ENCODE measurements at regions of chr2 and their contacts with region 1.

Region 1: DNA sequence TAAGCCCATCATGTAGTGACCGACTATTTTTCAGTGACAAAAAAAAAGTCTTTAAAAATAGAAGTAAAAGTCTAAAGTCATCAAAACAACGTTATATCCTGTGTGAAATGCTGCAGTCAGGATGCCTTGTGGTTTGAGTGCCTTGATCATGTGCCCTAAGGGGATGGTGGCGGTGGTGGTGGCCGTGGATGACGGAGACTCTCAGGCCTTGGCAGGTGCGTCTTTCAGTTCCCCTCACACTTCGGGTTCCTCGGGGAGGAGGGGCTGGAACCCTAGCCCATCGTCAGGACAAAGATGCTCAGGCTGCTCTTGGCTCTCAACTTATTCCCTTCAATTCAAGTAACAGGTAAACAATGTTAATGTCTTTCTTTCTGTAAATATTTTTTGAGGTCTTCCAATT is at the start of gene CD28:
- DNase-seq: peak; percentile 88
- H3K4me3 Mint-ChIP-seq: peak within 1 kb of the TSS; percentile 85
- H3K27ac Mint-ChIP-seq: peak within 1 kb of the TSS; percentile 100
- H3K4me1 Mint-ChIP-seq: peaks cover 53% of the 10 kb centered on the region
- H3K27me3 Mint-ChIP-seq: no peaks in the 10 kb centered on the region
- total RNA-seq, gene CD28: 132 and 133 TPM in 2 replicates

Region 2: GRCh38 chr2:203535078-203535783 is 171.2 kb before region 1 on chr2 and contains the start of gene RAPH1:
- intact Hi-C with region 1: loop called (anchors 1 kb)
- DNase-seq: peak; percentile 44
- H3K4me3 Mint-ChIP-seq: peak within 1 kb of the TSS; percentile 89
- H3K27ac Mint-ChIP-seq: peak within 1 kb of the TSS; percentile 90
- H3K4me1 Mint-ChIP-seq: peaks cover 30% of the 10 kb centered on the region
- H3K27me3 Mint-ChIP-seq: peaks cover 52% of the 10 kb centered on the region
- total RNA-seq, gene RAPH1: 4.2 and 4.6 TPM in 2 replicates

Region 3: DNA sequence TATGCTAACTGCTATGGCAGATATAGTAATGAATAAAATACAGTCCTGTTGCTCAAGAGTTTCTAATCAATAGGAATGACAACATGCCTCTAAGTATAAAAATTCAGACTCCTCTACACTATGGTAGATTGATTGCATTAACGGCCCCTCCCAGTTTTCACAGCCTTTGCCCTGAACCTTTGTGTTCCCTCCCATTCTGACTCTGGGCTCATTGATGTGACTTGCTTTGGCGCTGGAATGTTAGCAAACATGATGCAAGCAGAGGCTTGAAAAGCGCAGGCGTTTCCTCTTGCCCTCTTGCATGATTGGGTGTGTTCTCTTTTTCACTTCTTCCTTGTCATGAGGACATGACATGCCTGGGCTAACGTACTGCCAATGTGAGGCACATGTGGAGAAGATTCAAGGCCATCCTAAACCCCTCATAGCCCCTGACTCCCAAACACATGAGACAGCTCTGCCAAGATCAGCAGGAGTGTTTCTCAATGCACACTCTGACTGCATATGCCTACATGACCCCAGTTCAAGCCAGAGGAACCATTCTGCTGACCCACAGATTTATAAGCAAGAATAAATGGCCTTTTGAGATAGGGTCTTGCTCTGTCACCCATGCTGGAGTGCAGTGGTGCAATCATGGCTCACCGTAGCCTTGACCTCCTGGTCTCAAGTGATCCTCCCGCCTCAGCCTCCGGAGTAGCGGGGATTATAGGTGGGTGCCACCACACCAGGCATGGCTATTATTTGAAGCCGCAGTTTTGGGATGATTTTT is 49.7 kb before region 1 on chr2:
- intact Hi-C with region 1: loop called (anchors 5 kb)
- DNase-seq: no peak
- H3K4me3 Mint-ChIP-seq: no peak overlapping the region
- H3K27ac Mint-ChIP-seq: peak overlapping the region; percentile 48
- H3K4me1 Mint-ChIP-seq: peaks cover 42% of the 10 kb centered on the region
- H3K27me3 Mint-ChIP-seq: peaks cover 1% of the 10 kb centered on the region

Region 4: GRCh38 chr2:203694191-203694590 is 12.2 kb before region 1 on chr2:
- intact Hi-C with region 1: loop called (anchors 1 kb)
- DNase-seq: no peak
- H3K4me3 Mint-ChIP-seq: no peak overlapping the region
- H3K27ac Mint-ChIP-seq: no peak overlapping the region
- H3K4me1 Mint-ChIP-seq: peaks cover 14% of the 10 kb centered on the region
- H3K27me3 Mint-ChIP-seq: peaks cover 8% of the 10 kb centered on the region

Region 5: GRCh38 chr2:203740780-203741281 is 34.4 kb after region 1 on chr2:
- intact Hi-C with region 1: loop called (anchors 1 kb)
- DNase-seq: peak; percentile 66
- H3K4me3 Mint-ChIP-seq: peak overlapping the region; percentile 67
- H3K27ac Mint-ChIP-seq: peak overlapping the region; percentile 97
- H3K4me1 Mint-ChIP-seq: peaks cover 78% of the 10 kb centered on the region
- H3K27me3 Mint-ChIP-seq: no peaks in the 10 kb centered on the region

Region 6: DNA sequence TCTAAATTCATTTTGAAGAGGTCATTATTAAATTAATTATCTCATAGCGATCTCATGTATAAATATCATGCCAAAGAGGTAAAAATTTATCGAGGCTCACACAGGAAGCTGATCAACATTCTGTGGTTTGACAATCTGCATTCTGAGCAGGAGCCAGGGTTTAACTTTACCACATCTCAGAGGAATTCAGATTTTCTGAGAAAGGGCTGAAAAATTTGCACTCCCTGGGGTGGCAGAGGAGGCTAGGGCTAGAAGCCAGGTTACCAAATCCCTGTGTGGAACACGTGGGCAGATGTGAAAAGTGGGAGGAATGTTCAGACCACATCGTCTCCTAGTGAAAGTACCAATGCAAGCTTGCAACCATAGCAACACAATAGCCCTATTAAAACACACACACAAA is 97.7 kb after region 1 on chr2:
- intact Hi-C with region 1: loop called (anchors 1 kb)
- DNase-seq: no peak
- H3K4me3 Mint-ChIP-seq: peak overlapping the region; percentile 19
- H3K27ac Mint-ChIP-seq: peak overlapping the region; percentile 76
- H3K4me1 Mint-ChIP-seq: peaks cover 80% of the 10 kb centered on the region
- H3K27me3 Mint-ChIP-seq: peaks cover 2% of the 10 kb centered on the region

Region 7: GRCh38 chr2:203934041-203934492 is 227.7 kb after region 1 on chr2:
- intact Hi-C with region 1: loop called (anchors 2 kb)
- DNase-seq: peak; percentile 39
- H3K4me3 Mint-ChIP-seq: peak overlapping the region; percentile 73
- H3K27ac Mint-ChIP-seq: peak overlapping the region; percentile 93
- H3K4me1 Mint-ChIP-seq: peaks cover 59% of the 10 kb centered on the region
- H3K27me3 Mint-ChIP-seq: no peaks in the 10 kb centered on the region

Region 8: DNA sequence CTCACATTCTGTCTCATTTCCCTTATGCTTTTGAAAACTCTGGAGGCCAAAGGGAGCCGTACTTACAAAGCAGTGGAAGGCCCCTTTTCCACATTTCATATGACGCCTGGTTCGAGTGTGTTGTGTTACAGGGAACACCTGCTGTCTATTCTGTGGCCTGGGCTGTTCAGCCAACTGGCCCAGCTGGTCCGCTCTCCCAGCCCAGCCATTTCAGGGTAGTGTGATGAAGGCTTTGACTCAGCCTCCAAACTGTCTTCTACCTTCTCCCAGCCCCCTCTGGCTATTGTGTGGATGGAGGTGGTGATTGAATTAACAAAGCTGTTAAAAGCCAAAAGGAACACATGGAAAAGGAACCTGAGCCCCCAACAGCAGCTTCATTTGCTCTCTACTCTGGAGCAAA is 464.0 kb after region 1 on chr2:
- intact Hi-C with region 1: no loop called
- DNase-seq: no peak
- H3K4me3 Mint-ChIP-seq: no peak overlapping the region
- H3K27ac Mint-ChIP-seq: no peak overlapping the region
- H3K4me1 Mint-ChIP-seq: no peaks in the 10 kb centered on the region
- H3K27me3 Mint-ChIP-seq: peaks cover 5% of the 10 kb centered on the region

Measured in activated T-helper 1 cell treated with anti-CD3 and anti-CD28 coated beads, Interleukin-12 subunit alpha, Interleukin-12 subunit beta, Interleukin-2, Interleukin-4 antibody, amounts not matched to agents 30 ng/mL and 10 ng/mL and 1 ng/mL, durations not matched to agents 14 hours and 24 hours and 36 hours (primary cell).